ENCODE measurements at regions of chr7 and their contacts with region 1.

Region 1: GRCh38 chr7:157745721-157746709 is 409.2 kb downstream of the DNAJB6 start:
- DNase-seq: no peak
- ATAC-seq: no peak
- H3K4me3 Mint-ChIP-seq: no peak overlapping the region
- H3K27ac Mint-ChIP-seq: no peak overlapping the region
- H3K4me1 Mint-ChIP-seq: no peaks in the 10 kb centered on the region
- H3K27me3 Mint-ChIP-seq: no peaks in the 10 kb centered on the region

Region 2: GRCh38 chr7:157502701-157503111 is 243.3 kb before region 1 on chr7:
- CTCF ChIA-PET with region 1: no interaction called
- POLR2A ChIA-PET with region 1: no interaction called
- intact Hi-C with region 1: no loop called
- DNase-seq: peak; percentile 77
- ATAC-seq: peak; percentile 95
- H3K4me3 Mint-ChIP-seq: peak overlapping the region; percentile 67
- H3K27ac Mint-ChIP-seq: peak overlapping the region; percentile 92
- H3K4me1 Mint-ChIP-seq: peaks cover 31% of the 10 kb centered on the region
- H3K27me3 Mint-ChIP-seq: peaks cover 3% of the 10 kb centered on the region

Region 3: GRCh38 chr7:157807510-157807909 is 61.5 kb after region 1 on chr7:
- CTCF ChIA-PET with region 1: no interaction called
- POLR2A ChIA-PET with region 1: no interaction called
- intact Hi-C with region 1: loop called in 1 of 2 experiments (anchors 10 kb)
- DNase-seq: no peak
- ATAC-seq: no peak
- H3K4me3 Mint-ChIP-seq: no peak overlapping the region
- H3K27ac Mint-ChIP-seq: no peak overlapping the region
- H3K4me1 Mint-ChIP-seq: no peaks in the 10 kb centered on the region
- H3K27me3 Mint-ChIP-seq: no peaks in the 10 kb centered on the region

Measured in activated CD4-positive, alpha-beta T cell treated with anti-CD3 and anti-CD28 coated beads for 36 hours (primary cell).